A549 (cell line): ENCODE measurements at regions of chr15 and their contacts with region 1.

Region 1: GRCh38 chr15:68277603-68278344 is at the start of gene FEM1B:
- DNase-seq: peak; percentile 93 to 98
- ATAC-seq: peak; percentile 83 to 86
- H3K4me3 ChIP-seq: peak within 1 kb of the TSS; percentile 69
- H3K27ac ChIP-seq: peak within 1 kb of the TSS; percentile 94 to 97
- H3K4me1 ChIP-seq: peaks cover 68% of the 10 kb centered on the region
- CTCF ChIP-seq: peak; percentile 37; the same call in 2 of the 3 replicates
- EP300 ChIP-seq: no peak
- POLR2A ChIP-seq: peak; percentile 67
- RAD21 ChIP-seq: no peak; a peak in 1 of 5 replicates
- polyA plus RNA-seq, gene FEM1B: 59.1 and 103 TPM in 2 replicates

Region 2: GRCh38 chr15:68229386-68230156 is 48.2 kb before region 1 on chr15 and contains the start of gene CLN6:
- CTCF ChIA-PET with region 1: no interaction called
- POLR2A ChIA-PET with region 1: interaction called, 12 read pairs
- DNase-seq: peak; percentile 83 to 88
- ATAC-seq: peak; percentile 91
- H3K4me3 ChIP-seq: peak within 1 kb of the TSS; percentile 67
- H3K27ac ChIP-seq: peak within 1 kb of the TSS; percentile 94 to 96
- H3K4me1 ChIP-seq: peaks cover 25% of the 10 kb centered on the region
- CTCF ChIP-seq: no peak
- EP300 ChIP-seq: no peak
- POLR2A ChIP-seq: peak; percentile 60
- RAD21 ChIP-seq: no peak
- polyA plus RNA-seq, gene CLN6: 47.5 and 58.0 TPM in 2 replicates

Region 3: DNA sequence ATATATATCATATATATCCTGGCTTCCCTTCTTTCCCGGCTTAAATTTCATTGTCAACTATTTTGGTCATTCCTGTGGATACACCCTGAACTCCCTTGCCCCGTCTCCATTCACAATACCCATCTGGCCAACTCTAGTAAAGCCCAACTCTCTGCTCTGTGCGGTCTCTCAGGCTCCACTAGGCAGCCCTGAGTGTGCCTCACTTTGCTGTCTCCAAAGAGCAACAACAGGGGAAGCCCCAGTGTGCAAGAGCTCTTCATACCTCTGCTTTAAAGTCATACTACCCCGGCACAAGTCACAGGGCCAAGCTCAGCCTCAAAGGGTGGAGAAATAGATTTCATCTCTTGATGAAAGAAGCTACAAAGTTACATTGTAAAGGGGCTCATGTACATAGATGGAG is 19.1 kb before region 1 on chr15:
- CTCF ChIA-PET with region 1: interaction called, 86 read pairs
- POLR2A ChIA-PET with region 1: interaction called, 35 read pairs
- DNase-seq: no peak
- ATAC-seq: peak in 1 of 2 experiments; percentile 7; a peak in 1 of 6 replicates
- H3K4me3 ChIP-seq: no peak overlapping the region
- H3K27ac ChIP-seq: no peak overlapping the region
- H3K4me1 ChIP-seq: peaks cover 7% of the 10 kb centered on the region; the same call in 2 of the 3 replicates
- CTCF ChIP-seq: no peak
- EP300 ChIP-seq: no peak
- POLR2A ChIP-seq: no peak
- RAD21 ChIP-seq: no peak

Region 4: DNA sequence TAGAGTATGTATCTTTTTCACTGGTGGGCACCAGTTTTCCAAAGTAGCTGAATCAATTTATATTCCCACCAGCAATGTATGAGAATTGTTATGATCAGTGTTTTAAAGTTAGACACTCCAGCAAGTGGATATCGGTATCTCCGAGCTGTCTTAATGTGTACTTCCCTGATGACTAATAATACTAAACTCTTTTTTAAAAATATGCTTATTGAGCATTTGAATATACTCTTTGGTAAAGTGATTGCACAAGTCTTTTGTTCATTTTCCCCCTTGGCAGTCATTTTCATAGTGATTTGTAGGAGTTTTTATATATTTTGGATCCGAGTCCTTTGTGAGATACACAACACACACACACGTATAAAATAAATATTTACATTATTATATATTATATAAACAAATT is 12.7 kb before region 1 on chr15:
- CTCF ChIA-PET with region 1: interaction called, 6 read pairs
- POLR2A ChIA-PET with region 1: interaction called, 17 read pairs
- DNase-seq: no peak
- ATAC-seq: no peak
- H3K4me3 ChIP-seq: no peak overlapping the region
- H3K27ac ChIP-seq: no peak overlapping the region
- H3K4me1 ChIP-seq: no peaks in the 10 kb centered on the region
- CTCF ChIP-seq: no peak
- EP300 ChIP-seq: no peak
- POLR2A ChIP-seq: no peak
- RAD21 ChIP-seq: no peak

Region 5: DNA sequence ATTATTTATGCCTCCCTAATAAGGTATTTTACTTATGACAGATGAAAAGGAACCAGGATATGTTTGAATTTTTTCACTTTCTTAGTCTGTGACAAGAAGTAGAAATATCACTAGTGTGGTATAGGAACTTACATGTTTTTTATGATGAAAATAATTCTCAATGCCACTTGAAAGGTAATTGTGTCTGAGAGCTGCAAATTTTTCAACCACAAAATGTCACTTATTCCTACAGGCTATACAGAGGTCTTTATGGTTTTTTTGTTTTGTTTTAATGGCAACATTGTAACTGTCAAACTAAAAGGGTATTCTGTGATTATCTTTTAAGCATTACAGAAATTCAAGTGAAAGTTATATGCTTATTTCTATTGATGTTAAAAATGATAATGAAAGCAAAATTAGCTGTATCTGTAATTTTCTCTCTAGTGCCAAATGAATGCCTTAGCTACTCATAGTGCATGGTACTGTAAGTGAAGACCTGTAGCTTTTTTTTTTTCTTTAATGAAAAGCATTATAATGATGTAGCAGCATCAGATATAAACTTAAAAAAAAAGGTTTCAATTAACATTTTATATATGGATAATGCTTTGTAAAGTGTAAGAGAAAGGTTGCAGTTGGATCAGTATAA is 14.5 kb after region 1 on chr15:
- CTCF ChIA-PET with region 1: interaction called, 11 read pairs
- POLR2A ChIA-PET with region 1: interaction called, 17 read pairs
- DNase-seq: no peak
- ATAC-seq: no peak
- H3K4me3 ChIP-seq: no peak overlapping the region
- H3K27ac ChIP-seq: no peak overlapping the region
- H3K4me1 ChIP-seq: peaks cover 11% of the 10 kb centered on the region; the same call in 2 of the 3 replicates
- CTCF ChIP-seq: no peak
- EP300 ChIP-seq: no peak
- POLR2A ChIP-seq: no peak
- RAD21 ChIP-seq: no peak